ENCODE measurements at regions of chr2 and their contacts with region 1.

Region 1: DNA sequence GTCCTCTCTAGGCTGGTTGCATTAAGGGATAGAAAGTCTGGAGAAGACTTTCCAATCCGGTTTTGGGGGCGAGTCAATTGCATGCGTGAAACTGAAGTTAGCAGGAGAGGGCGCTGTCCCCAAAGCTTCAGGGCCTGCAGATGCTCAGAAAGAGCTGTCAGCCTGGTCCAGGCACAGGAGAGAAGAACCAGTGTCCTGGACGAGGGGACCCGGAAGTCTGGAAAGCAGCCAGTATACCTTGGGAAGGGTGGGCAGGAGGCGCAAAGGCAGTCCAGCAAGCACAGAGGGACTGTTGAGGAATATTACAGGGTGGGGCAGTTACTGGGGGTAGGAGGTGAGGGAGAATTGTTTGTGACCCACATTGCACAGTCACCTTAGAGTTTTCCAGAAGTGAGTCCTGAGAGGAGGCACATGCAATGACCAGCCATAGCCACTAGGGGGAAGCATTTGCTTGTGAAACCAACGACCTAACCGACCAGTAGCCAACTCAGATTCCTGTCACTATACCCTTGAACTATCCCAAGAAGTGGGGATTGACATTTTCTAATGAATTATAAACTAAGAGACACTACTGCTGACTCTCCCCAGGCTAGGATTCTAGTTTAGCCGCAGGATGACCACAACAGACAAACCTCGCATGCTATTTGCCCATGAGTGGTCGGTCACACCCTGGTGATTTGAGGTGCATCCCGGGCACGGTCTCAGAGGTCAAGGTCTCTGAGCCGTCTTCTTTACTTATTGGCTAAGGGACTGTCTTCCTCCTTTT is 172.8 kb downstream of the RDH14 start:
- DNase-seq: peak; percentile 61 to 92
- H3K4me3 ChIP-seq: no peak overlapping the region
- H3K27ac ChIP-seq: no peak overlapping the region
- H3K4me1 ChIP-seq: no peaks in the 10 kb centered on the region
- H3K27me3 ChIP-seq: no peaks in the 10 kb centered on the region
- CTCF ChIP-seq: peak; percentile 76 to 83 (median 80)
- EP300 ChIP-seq: no peak
- POLR2A ChIP-seq: no peak
- RAD21 ChIP-seq: peak; percentile 83 to 85

Region 2: DNA sequence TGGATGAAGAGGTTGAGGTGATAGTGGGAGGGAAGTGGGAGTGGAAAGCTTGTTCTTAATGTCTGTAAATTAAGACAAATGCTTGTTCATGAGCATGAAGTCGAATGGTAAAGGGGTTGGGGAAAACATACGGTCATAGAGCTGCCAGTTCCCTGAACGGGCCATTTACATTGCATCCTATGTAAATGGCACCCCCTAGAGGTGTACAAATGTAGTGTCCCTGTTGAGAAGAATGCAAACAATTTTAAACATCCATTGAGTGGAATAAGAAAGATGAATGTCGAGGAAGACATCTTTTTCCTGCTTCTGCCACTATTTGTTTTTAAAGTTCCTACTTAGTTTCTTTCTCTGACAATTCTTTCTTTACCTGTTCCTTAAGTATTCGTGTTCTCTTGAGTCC is 17.1 kb after region 1 on chr2:
- CTCF ChIA-PET with region 1: interaction called, 72 read pairs
- POLR2A ChIA-PET with region 1: no interaction called
- DNase-seq: no peak
- H3K4me3 ChIP-seq: no peak overlapping the region
- H3K27ac ChIP-seq: no peak overlapping the region
- H3K4me1 ChIP-seq: no peaks in the 10 kb centered on the region
- H3K27me3 ChIP-seq: no peaks in the 10 kb centered on the region
- CTCF ChIP-seq: peak in 2 of 3 experiments; percentile 48 to 73; a peak in 3 of 4 replicates
- EP300 ChIP-seq: no peak
- POLR2A ChIP-seq: no peak
- RAD21 ChIP-seq: peak; percentile 42 to 54

Region 3: GRCh38 chr2:18413676-18414396 is 26.2 kb after region 1 on chr2:
- CTCF ChIA-PET with region 1: interaction called, 72 read pairs
- POLR2A ChIA-PET with region 1: no interaction called
- DNase-seq: no peak
- H3K4me3 ChIP-seq: no peak overlapping the region
- H3K27ac ChIP-seq: no peak overlapping the region
- H3K4me1 ChIP-seq: no peaks in the 10 kb centered on the region
- H3K27me3 ChIP-seq: no peaks in the 10 kb centered on the region
- CTCF ChIP-seq: no peak
- EP300 ChIP-seq: no peak
- POLR2A ChIP-seq: no peak
- RAD21 ChIP-seq: no peak

Region 4: GRCh38 chr2:18425210-18425703 is 37.6 kb after region 1 on chr2:
- CTCF ChIA-PET with region 1: interaction called, 13 read pairs
- POLR2A ChIA-PET with region 1: no interaction called
- DNase-seq: no peak
- H3K4me3 ChIP-seq: no peak overlapping the region
- H3K27ac ChIP-seq: no peak overlapping the region
- H3K4me1 ChIP-seq: no peaks in the 10 kb centered on the region
- H3K27me3 ChIP-seq: no peaks in the 10 kb centered on the region
- CTCF ChIP-seq: no peak
- EP300 ChIP-seq: no peak
- POLR2A ChIP-seq: no peak
- RAD21 ChIP-seq: no peak

Region 5: GRCh38 chr2:18435421-18436037 is 47.9 kb after region 1 on chr2:
- CTCF ChIA-PET with region 1: interaction called, 10 read pairs
- POLR2A ChIA-PET with region 1: no interaction called
- DNase-seq: peak in 1 of 2 experiments; percentile 53
- H3K4me3 ChIP-seq: no peak overlapping the region
- H3K27ac ChIP-seq: no peak overlapping the region
- H3K4me1 ChIP-seq: no peaks in the 10 kb centered on the region
- H3K27me3 ChIP-seq: no peaks in the 10 kb centered on the region
- CTCF ChIP-seq: peak in 2 of 3 experiments; percentile 46 to 69; a peak in 2 of 4 replicates
- EP300 ChIP-seq: no peak
- POLR2A ChIP-seq: no peak
- RAD21 ChIP-seq: peak; percentile 80 to 83

Region 6: DNA sequence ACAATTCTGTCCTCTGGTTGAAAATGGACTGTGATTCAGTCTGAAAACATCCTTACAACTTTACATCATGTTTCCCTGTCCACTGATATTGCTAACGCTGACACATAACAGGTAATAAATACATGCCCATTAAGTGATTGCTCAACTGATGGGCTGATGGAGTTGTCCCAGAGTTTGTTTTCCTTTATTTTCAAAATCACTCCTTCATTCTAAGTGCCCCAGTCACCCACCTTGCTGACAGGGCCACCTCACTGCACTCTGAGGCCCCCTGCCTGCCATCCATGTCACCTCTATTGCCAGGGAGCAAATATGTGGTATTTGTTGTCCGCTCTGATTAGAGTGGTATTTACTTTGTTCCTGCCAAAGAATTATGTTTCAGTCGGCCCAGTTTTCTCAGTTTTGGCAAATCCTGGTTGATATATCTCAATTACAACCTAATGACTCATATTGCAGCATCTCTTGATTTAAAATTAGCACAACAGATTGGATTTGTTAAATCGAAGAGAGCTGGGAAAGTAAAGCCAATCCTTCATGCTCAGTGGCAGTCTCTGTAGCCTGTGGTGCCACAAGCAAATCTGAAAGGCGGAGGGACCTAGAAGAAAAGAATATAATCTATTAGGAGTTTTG is 67.7 kb after region 1 on chr2:
- CTCF ChIA-PET with region 1: interaction called, 11 read pairs
- POLR2A ChIA-PET with region 1: no interaction called
- DNase-seq: peak in 1 of 2 experiments; percentile 50
- H3K4me3 ChIP-seq: no peak overlapping the region
- H3K27ac ChIP-seq: no peak overlapping the region
- H3K4me1 ChIP-seq: peaks cover 0 to 9% (median 5%) of the 10 kb centered on the region in 4 experiments; a peak in 3 of 7 replicates
- H3K27me3 ChIP-seq: no peaks in the 10 kb centered on the region
- CTCF ChIP-seq: peak; percentile 38 to 55 (median 54)
- EP300 ChIP-seq: no peak
- POLR2A ChIP-seq: no peak
- RAD21 ChIP-seq: peak in 1 of 2 experiments; percentile 32; a peak in 2 of 4 replicates

Region 7: GRCh38 chr2:18500333-18500732 is 112.7 kb after region 1 on chr2:
- CTCF ChIA-PET with region 1: interaction called, 10 read pairs
- POLR2A ChIA-PET with region 1: no interaction called
- DNase-seq: no peak
- H3K4me3 ChIP-seq: no peak overlapping the region
- H3K27ac ChIP-seq: no peak overlapping the region
- H3K4me1 ChIP-seq: no peaks in the 10 kb centered on the region
- H3K27me3 ChIP-seq: peaks cover 0 to 1% (median 0%) of the 10 kb centered on the region in 4 experiments; a peak in 1 of 7 replicates
- CTCF ChIP-seq: no peak
- EP300 ChIP-seq: no peak
- POLR2A ChIP-seq: no peak
- RAD21 ChIP-seq: no peak